Dendritic cell treated with granulocyte-macrophage colony-stimulating factor and Interleukin-4, amounts not matched to agents 40 ng/mL and 50 ng/mL, for 4 days (primary cell): ENCODE measurements at regions of chr7 and their contacts with region 1.

Region 1: DNA sequence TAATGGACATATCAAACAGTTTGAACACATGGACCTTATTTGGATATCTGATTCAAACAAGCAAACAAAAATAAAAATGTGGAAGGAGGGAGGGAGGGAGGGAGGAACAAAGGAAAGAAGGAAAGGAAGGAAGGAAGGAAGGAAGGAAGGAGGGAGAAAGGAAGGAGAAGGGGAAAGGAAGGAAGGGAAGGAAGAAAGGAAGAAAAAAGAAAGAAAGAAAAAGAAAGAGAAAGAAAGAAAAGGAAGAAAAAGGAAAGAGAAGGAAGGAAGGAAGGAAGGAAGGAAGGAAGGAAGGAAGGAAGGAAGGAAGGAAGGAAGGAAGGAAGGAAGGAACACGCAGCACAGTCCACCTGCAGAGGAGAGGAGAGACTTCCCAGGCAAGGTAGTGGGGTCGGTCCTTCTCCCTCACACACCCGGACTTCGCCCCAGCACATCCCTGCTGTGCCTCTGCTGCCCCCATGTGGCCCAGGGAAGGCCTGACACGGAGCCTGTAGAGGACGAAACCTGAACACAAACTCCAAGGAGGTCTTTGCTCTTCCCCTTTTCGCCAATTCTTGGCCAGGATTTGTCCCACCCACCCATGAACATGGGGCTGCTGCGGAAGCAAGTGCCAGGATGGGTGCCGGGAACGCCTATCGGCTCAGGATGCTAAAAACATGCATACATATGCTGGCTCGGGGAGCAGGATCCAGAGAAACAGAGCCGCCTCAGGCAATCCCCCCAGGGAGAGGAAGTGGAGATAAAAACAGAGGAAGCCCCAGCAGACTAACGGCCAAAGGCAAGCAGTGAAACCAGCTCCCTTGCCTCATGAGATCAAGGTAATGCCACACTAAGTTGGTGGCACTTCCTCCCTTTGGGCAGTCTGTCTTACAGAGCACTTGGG is 52.3 kb upstream of the DGKI start:
- H3K4me3 Mint-ChIP-seq: peak overlapping the region; percentile 63
- H3K27ac Mint-ChIP-seq: peak overlapping the region; percentile 70
- H3K4me1 Mint-ChIP-seq: peaks cover 31% of the 10 kb centered on the region
- H3K27me3 Mint-ChIP-seq: no peaks in the 10 kb centered on the region

Region 2: DNA sequence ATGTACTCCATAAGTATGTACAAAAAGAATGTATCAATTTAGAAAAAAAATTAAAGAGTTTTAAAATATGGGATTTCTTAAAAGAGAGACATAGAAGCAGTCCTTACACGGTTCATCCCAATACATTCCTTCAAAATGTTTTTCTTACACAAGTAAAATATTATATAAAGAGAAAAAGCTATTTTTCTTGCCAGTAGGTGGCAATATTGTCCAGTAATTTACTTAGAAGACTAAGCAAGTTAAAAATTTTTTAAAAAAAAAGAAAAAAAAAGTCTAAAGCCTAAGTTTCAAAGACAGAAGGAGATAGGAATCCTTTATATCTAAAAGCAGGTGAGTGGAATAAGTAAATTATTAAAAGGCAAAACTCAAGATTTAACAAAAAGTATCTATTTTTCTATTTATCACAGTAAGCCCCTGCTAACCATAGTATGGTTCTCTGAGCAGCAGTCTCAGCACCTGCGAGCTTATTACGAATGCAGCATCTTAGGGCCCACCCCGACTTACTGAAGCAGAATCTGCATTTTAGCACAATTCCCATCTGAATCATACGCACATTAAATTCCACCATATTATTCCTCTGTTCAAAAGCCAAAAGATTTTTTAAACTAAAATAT is 292.9 kb before region 1 on chr7:
- intact Hi-C with region 1: loop called (anchors 2 kb)
- H3K4me3 Mint-ChIP-seq: no peak overlapping the region
- H3K27ac Mint-ChIP-seq: no peak overlapping the region
- H3K4me1 Mint-ChIP-seq: no peaks in the 10 kb centered on the region
- H3K27me3 Mint-ChIP-seq: peaks cover 14% of the 10 kb centered on the region

Region 3: DNA sequence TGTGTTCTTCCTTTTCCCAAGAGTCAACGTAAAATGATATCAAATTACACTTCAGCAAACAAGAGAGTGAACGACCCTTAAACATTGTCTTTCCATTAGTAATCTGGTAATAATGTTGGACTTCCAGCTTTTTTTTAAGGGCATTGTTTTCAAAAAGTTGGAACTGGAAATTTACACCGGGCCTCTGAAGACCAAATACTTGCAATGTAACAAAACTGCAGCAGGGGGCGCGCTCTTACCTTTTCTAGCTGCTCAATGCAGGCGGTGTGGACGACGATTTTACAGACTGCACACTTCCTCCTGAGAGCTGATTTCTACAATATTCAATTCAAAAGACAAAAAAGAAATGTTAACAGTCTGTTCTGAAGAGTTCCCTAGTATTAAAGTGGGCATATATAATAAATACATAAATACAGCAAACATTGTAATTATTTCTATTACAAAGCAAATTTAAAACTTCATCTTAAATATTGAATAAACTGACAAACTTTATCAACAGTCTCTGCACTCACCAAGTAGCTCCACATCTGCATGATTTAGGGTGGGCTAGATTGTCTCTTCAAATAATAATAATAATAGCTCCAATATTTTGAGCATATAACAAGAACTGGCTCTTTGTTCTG is 242.7 kb before region 1 on chr7:
- intact Hi-C with region 1: loop called (anchors 1 kb)
- H3K4me3 Mint-ChIP-seq: no peak overlapping the region
- H3K27ac Mint-ChIP-seq: no peak overlapping the region
- H3K4me1 Mint-ChIP-seq: no peaks in the 10 kb centered on the region
- H3K27me3 Mint-ChIP-seq: peaks cover 4% of the 10 kb centered on the region

Region 4: DNA sequence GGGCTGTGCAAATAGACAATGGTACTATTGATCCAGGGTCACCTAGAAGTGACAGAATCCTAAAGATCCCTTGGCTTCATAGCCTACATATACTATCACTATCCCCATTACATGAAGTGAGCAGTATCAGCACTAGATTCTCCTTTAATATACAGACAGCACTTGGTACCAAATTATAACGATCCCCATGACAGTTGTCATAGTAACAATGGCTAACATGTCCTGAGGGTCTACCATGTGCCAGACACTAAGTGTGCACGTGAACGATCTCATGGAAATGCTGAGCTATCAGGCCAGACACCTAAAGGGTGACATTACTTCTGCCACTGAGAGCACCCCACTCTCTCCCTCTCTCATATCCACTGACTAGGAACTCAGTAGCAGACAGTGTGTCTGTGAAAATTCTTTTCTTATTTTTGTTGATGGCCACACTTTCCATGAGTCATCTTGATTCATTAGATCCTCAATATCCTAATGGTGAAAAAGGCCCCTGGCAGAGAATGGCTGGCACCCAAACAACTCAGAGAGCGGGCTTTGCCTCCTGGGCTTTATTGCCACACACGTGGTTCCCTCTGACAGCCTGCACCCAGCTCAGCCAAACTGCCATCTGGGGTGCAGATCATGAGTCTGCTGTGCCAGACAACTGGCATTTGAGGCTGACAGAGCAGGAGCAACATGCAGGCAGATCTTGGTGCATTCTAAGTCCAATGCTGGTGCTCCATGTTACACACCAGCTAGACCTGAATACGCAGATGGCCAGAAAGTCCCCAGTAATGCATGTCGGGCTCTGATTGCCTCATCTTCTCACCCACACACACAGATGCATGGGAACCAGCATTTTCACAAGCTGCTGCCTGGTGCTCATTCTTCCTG is 228.6 kb before region 1 on chr7:
- intact Hi-C with region 1: no loop called
- H3K4me3 Mint-ChIP-seq: no peak overlapping the region
- H3K27ac Mint-ChIP-seq: no peak overlapping the region
- H3K4me1 Mint-ChIP-seq: peaks cover 6% of the 10 kb centered on the region
- H3K27me3 Mint-ChIP-seq: peaks cover 7% of the 10 kb centered on the region

Region 5: GRCh38 chr7:137867289-137867688 is 31.8 kb before region 1 on chr7:
- intact Hi-C with region 1: no loop called
- H3K4me3 Mint-ChIP-seq: no peak overlapping the region
- H3K27ac Mint-ChIP-seq: no peak overlapping the region
- H3K4me1 Mint-ChIP-seq: peaks cover 8% of the 10 kb centered on the region
- H3K27me3 Mint-ChIP-seq: no peaks in the 10 kb centered on the region

Region 6: DNA sequence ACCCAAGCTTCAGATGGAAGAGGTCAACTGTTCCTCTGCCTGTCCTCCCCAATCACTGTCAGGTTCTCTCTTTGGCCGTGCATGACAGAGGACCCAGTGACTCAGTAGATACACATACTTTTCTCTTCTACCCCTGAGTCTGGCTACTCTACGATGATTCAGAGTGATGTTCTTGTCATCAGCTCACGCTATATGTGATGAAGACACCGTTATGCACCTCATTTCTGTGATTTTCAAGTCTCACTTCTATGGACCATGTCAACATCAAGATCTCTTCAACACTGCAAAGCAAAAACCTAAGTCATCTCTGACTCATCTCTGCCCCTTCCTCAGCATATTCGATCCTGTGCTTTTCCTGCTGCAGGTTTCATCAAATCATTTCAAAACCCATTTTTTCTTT is 24.3 kb after region 1 on chr7:
- intact Hi-C with region 1: no loop called
- H3K4me3 Mint-ChIP-seq: no peak overlapping the region
- H3K27ac Mint-ChIP-seq: peak overlapping the region; percentile 3
- H3K4me1 Mint-ChIP-seq: peaks cover 24% of the 10 kb centered on the region
- H3K27me3 Mint-ChIP-seq: no peaks in the 10 kb centered on the region

Region 7: GRCh38 chr7:138008547-138009349 is 109.7 kb after region 1 on chr7:
- intact Hi-C with region 1: loop called (anchors 1 kb)
- H3K4me3 Mint-ChIP-seq: no peak overlapping the region
- H3K27ac Mint-ChIP-seq: peak overlapping the region; percentile 44
- H3K4me1 Mint-ChIP-seq: peaks cover 14% of the 10 kb centered on the region
- H3K27me3 Mint-ChIP-seq: no peaks in the 10 kb centered on the region

Region 8: DNA sequence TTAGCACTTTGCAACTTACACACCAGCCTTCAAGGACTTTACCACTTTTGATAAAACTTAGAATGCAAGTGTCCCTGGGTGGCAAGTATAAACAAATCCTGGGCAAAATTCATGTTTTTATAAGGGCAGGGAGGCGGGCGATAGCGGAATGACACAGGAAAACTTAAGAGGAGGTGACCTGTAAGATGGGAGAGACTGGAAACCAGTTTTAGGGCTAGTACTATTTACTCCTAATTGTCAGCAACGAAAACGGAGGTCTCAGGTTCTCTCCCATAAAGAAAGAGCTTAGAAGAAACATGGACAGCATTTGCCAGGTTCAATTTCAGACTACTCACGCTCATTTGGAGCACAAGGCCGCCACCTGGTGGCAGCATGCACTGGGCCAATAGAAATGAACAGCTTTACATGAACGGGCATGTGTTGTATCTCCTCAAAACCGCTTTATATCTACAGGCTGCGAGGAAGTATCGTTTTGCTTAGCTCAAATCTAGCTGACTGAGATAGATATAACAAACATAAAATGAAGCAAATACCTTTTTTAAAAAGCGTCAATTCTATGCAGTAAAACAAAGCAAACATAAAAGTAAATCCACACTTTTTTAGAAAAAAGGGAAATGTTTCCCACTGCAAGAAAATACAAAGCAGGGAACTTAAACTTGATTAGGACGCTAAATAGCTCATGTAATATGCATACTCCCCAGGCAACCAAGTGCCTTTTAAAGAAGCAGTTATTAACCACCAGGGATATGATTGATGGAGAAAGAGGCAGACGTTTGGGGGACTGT is 839.7 kb after region 1 on chr7:
- intact Hi-C with region 1: loop called (anchors 2 kb)
- H3K4me3 Mint-ChIP-seq: no peak overlapping the region
- H3K27ac Mint-ChIP-seq: no peak overlapping the region
- H3K4me1 Mint-ChIP-seq: peaks cover 5% of the 10 kb centered on the region
- H3K27me3 Mint-ChIP-seq: no peaks in the 10 kb centered on the region